Esophagus squamous epithelium (tissue), 5 donors: ENCODE measurements at regions of chr15 and their contacts with region 1.

Region 1: GRCh38 chr15:52246686-52247431 is 48.7 kb downstream of the MYO5C start:
- DNase-seq: no peak
- H3K4me3 ChIP-seq: no peak overlapping the region
- H3K27ac ChIP-seq: peak overlapping the region in 1 of 4 donors; percentile 12
- H3K4me1 ChIP-seq: no peaks in the 10 kb centered on the region
- H3K27me3 ChIP-seq: no peaks in the 10 kb centered on the region
- CTCF ChIP-seq: no peak
- POLR2A ChIP-seq: no peak

Region 2: GRCh38 chr15:52728899-52729298 is 482.0 kb after region 1 on chr15:
- intact Hi-C with region 1: loop called (anchors 5 kb)
- DNase-seq: no peak
- H3K4me3 ChIP-seq: no peak overlapping the region
- H3K27ac ChIP-seq: peak overlapping the region in 2 of 4 donors; percentile 4 to 6
- H3K4me1 ChIP-seq: peaks cover 0 to 19% (median 17%) of the 10 kb centered on the region in 3 donors
- H3K27me3 ChIP-seq: no peaks in the 10 kb centered on the region
- CTCF ChIP-seq: no peak
- POLR2A ChIP-seq: no peak